HEK293T (cell line): ENCODE measurements at regions of chr5 and their contacts with region 1.

Region 1: DNA sequence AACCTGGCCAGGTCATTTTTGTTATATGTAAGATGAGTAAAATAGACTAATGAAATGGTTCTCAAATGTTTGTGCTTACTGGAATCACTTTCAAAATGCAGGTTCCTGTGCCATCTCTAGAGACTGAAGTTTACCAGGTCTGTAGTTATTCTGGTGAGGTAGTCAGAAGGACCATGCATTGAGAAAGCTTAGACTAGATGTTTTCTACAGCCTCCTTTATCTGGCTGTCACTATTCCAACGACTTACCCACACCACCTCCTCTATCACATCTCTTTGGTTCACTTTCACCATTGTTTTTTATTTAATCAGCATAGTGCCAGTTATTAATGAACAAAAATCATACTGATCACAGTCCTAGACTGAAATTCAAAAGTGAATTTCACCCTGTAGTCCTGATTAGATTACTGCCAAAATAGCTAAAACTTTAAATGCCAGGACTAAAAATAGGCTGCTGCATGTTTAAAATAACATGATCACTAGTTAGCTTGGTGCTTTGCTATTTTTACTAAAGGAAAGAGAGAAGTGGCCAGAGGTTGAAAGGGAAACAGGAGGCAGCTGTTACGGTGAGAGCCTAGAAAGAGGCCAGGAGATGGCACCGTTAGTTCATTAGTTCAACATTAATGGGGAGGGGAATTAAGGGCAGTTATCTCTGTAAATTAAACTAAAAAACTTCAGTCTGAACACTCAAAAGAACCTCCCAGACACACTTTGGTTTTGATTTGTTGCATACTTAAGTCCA is 13.9 kb upstream of the FNIP1 start:
- DNase-seq: peak; percentile 12

Region 2: DNA sequence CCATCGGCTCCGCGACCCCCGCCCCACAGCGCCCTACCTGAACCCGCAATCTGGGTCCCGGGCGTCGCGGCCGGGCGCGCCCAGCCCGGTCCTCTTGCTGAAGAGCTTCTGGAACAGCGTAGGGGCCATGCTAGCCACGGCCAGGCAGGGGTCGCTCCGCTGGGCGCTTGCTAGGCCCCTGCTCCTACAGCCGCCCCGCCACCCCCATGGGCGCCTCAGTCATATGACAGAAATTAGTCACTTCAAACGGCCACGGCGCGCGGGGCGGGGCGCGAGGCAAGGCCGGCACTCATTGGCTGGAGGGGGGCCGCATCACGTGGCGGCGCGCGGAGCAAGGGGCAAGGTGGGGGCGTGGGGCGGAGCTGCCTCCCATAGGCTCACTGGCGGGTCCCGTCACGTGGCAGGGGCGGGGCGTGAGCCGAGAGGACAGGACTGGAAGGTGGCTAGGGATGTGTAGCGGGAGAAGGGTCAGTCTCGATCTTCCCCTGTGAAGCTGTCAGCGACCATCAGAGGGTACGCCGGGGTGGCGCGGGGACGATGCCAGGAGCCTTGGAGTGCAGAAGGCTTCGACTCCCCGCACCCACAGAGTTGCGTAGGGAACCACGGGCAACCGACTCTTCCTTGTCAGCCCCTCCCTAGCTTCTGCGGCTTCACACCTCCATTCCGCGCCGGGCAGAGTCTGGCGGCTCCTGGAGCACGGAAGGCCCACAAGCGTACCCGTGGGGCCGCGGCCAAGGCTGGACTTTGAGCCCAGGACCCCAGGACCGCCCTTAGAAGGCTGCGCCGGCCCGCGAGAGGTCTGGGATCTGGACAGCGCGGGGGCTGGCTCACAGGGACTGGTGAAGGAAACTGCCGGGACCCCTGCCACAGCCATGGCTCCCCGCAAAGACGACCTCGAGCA is 13.6 kb before region 1 on chr5 and contains the start of gene FNIP1:
- CTCF ChIA-PET with region 1: no interaction called
- POLR2A ChIA-PET with region 1: interaction called, 12 read pairs
- DNase-seq: peak; percentile 98